HCT116 (cell line): ENCODE measurements at regions of chr12 and their contacts with region 1.

Region 1: DNA sequence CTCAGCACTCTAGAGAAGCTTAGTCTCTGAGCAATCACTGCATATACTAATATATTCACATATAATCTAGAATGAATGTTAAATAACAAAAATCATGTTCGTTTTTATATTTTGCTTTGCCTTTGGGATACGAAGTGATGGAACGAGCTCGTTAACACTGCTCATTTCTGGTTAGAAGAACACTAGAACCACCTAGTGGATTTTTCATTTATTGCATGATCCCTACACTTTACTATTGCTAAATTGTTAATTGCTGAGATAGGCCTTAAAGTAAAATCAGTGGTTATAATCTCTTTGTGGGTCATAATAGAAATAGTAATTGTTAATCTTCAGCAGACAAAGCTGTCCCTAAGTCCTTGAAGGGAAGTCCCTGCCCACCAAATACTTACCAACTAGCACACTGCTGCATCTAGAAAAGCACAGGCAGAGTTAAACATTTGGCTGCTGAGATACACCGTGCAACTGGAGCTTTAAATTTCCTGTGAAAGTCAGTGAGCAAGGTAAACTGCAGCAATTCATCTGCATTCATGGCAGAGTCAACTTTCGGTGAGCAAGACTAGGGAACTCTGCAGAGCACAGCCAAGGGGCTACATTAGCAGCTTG is 353.7 kb downstream of the APAF1 start:
- DNase-seq: peak; percentile 12
- ATAC-seq: peak; percentile 80
- H3K4me3 ChIP-seq: no peak overlapping the region
- H3K27ac ChIP-seq: no peak overlapping the region
- H3K4me1 ChIP-seq: no peaks in the 10 kb centered on the region
- H3K27me3 ChIP-seq: peaks cover 27% of the 10 kb centered on the region
- CTCF ChIP-seq: peak; percentile 44 to 71 (median 69)
- POLR2A ChIP-seq: no peak
- RAD21 ChIP-seq: peak; percentile 81

Region 2: GRCh38 chr12:98424726-98425401 is 573.9 kb before region 1 on chr12:
- CTCF ChIA-PET with region 1: interaction called, 13 read pairs
- POLR2A ChIA-PET with region 1: no interaction called
- RAD21 ChIA-PET with region 1: no interaction called
- intact Hi-C with region 1: loop called (anchors 1 kb)
- DNase-seq: peak; percentile 57
- ATAC-seq: peak; percentile 83
- H3K4me3 ChIP-seq: no peak overlapping the region
- H3K27ac ChIP-seq: no peak overlapping the region
- H3K4me1 ChIP-seq: peaks cover 3 to 16% of the 10 kb centered on the region in 2 experiments; a peak in 3 of 4 replicates
- H3K27me3 ChIP-seq: no peaks in the 10 kb centered on the region
- CTCF ChIP-seq: peak; percentile 64 to 81 (median 79)
- POLR2A ChIP-seq: no peak
- RAD21 ChIP-seq: peak; percentile 78

Region 3: GRCh38 chr12:98698603-98699463 is 300.0 kb before region 1 on chr12:
- CTCF ChIA-PET with region 1: interaction called, 13 read pairs
- POLR2A ChIA-PET with region 1: no interaction called
- RAD21 ChIA-PET with region 1: no interaction called
- intact Hi-C with region 1: loop called (anchors 1 kb)
- DNase-seq: peak; percentile 31
- ATAC-seq: peak; percentile 98
- H3K4me3 ChIP-seq: no peak overlapping the region
- H3K27ac ChIP-seq: no peak overlapping the region
- H3K4me1 ChIP-seq: no peaks in the 10 kb centered on the region
- H3K27me3 ChIP-seq: no peaks in the 10 kb centered on the region
- CTCF ChIP-seq: peak; percentile 50 to 75 (median 75); a peak in 5 of 6 replicates
- POLR2A ChIP-seq: no peak
- RAD21 ChIP-seq: peak; percentile 60

Region 4: GRCh38 chr12:98725476-98726247 is 273.1 kb before region 1 on chr12:
- CTCF ChIA-PET with region 1: interaction called, 8 read pairs
- POLR2A ChIA-PET with region 1: no interaction called
- RAD21 ChIA-PET with region 1: no interaction called
- intact Hi-C with region 1: loop called (anchors 2 kb)
- DNase-seq: peak; percentile 21
- ATAC-seq: peak; percentile 99
- H3K4me3 ChIP-seq: no peak overlapping the region
- H3K27ac ChIP-seq: no peak overlapping the region
- H3K4me1 ChIP-seq: no peaks in the 10 kb centered on the region
- H3K27me3 ChIP-seq: no peaks in the 10 kb centered on the region
- CTCF ChIP-seq: peak; percentile 43 to 63 (median 60); a peak in 5 of 6 replicates
- POLR2A ChIP-seq: no peak
- RAD21 ChIP-seq: peak; percentile 54

Region 5: DNA sequence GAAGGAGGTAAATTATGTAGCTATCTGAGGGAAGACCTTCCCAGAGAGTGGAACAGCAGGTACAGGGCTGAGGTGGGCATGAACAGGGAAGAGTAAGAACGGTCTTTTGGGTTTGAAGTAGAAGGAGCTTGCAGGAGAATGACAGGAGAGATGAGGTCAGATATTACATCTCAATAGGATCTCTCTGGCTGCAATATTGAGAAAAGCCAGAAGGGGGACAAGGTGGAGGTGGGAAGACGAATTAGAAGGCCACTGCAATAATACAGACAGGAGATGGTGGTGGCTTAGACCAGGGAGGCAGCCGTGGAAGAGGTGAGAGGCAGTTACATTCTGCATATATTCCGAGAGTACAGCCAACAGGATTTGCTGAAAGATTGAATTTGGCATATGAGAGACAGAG is 43.5 kb before region 1 on chr12:
- CTCF ChIA-PET with region 1: interaction called, 13 read pairs
- POLR2A ChIA-PET with region 1: no interaction called
- RAD21 ChIA-PET with region 1: no interaction called
- intact Hi-C with region 1: loop called (anchors 2 kb)
- DNase-seq: peak; percentile 27
- ATAC-seq: peak; percentile 96
- H3K4me3 ChIP-seq: no peak overlapping the region
- H3K27ac ChIP-seq: no peak overlapping the region
- H3K4me1 ChIP-seq: no peaks in the 10 kb centered on the region
- H3K27me3 ChIP-seq: peaks cover 7% of the 10 kb centered on the region; the same call in 1 of the 2 replicates
- CTCF ChIP-seq: peak; percentile 23 to 51 (median 42); a peak in 5 of 6 replicates
- POLR2A ChIP-seq: no peak
- RAD21 ChIP-seq: peak; percentile 25; the same call in 1 of the 2 replicates